Activated CD4-positive, alpha-beta T cell treated with anti-CD3 and anti-CD28 coated beads, Interleukin-2, amount 10 ng/mL, durations not matched to agents 7 days and 5 days (primary cell): ENCODE measurements at regions of chr15 and their contacts with region 1.

Region 1: DNA sequence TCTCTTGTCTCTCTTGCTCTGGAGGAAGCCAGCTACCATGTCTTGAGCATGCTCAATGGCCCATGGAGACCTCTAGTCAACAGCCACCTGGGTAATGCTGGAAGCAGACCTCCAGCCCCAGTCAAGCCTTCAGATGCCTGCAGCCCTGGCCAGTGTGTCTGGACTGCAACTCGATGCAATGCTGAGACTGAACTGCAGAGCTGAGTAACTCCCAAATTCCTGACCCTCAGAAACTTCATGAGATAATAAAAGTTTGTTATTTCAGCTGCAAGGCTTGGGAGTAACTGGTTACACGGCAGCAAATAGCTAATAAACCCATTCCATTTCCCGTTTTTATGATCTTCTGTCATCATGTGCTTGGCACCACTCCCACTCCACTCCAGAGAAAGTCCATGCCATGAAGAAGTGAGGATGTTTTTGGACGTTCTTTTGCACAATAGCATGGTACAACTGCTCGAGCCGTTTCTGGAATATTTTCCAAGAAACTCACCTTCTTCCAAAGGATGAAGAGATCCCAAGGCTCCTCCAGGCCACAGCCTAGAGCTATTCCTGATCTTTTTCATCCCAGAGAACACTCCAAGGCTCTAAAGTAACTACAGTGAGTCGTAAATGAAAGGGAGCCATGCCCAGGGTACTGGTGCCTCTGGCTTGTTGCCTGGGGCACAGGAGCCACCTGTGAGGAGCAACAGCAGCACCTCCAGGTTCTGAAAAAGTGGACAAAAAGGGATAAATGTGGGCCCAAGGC is 72.0 kb upstream of the KLF13 start:
- DNase-seq: no peak
- H3K4me3 Mint-ChIP-seq: no peak overlapping the region
- H3K27ac Mint-ChIP-seq: peak overlapping the region; percentile 57
- H3K4me1 Mint-ChIP-seq: peaks cover 49% of the 10 kb centered on the region
- H3K27me3 Mint-ChIP-seq: peaks cover 8% of the 10 kb centered on the region

Region 2: DNA sequence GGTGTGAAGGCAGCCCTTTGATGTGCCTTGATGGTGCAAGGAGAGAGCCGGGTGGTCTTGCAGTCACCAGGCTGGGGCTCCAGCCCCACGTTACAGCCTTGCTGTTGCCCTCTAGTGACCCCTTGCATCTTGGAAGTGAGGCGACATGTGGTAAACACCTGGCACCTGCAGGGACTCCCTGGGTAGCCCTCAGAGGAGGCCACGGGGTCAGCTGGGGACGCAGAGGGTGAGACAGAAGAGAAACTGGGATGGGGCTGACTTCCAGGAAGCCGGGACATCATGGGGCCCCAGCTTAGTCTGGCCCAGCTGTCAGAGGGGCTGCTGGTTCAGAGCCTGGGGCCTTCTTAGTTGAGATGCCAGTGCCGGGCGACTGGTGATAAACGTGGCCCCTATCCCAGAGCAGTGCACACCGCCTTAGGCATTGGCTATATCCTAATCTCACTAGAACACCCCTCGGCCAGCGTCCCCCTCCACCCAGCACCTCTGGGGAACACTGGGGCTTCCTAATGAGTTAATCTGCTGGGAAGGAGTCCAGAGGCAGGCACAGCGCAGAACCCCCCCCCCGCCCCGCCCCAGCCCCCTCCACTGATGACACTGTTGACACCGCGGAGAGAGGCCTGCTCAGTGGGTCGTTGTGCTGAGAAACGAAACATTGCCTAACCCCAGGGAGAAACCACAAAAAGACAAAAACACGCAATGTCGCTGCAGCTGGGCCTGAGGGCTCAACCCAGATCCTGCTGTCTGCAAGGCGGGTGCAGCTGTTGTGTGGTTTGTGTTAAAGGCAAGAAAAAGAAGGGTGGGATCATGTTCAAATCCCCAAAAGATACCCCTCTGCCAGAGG is 11.5 kb after region 1 on chr15:
- CTCF ChIA-PET with region 1: interaction called, 49 read pairs
- POLR2A ChIA-PET with region 1: no interaction called
- DNase-seq: peak; percentile 89
- H3K4me3 Mint-ChIP-seq: peak overlapping the region; percentile 60
- H3K27ac Mint-ChIP-seq: peak overlapping the region; percentile 98
- H3K4me1 Mint-ChIP-seq: peaks cover 97% of the 10 kb centered on the region
- H3K27me3 Mint-ChIP-seq: no peaks in the 10 kb centered on the region